ENCODE measurements at regions of chr14 and their contacts with region 1.

Region 1: GRCh38 chr14:96100161-96101029 is 61.2 kb downstream of the C14orf132 start:
- DNase-seq: peak; percentile 75 to 79
- ATAC-seq: peak in 3 of 4 donors; percentile 46 to 62 (median 52)
- H3K4me3 ChIP-seq: no peak overlapping the region
- H3K27ac ChIP-seq: no peak overlapping the region
- H3K4me1 ChIP-seq: no peaks in the 10 kb centered on the region
- H3K27me3 ChIP-seq: peaks cover 0 to 20% (median 2%) of the 10 kb centered on the region in 3 donors
- CTCF ChIP-seq: peak; percentile 54

Region 2: DNA sequence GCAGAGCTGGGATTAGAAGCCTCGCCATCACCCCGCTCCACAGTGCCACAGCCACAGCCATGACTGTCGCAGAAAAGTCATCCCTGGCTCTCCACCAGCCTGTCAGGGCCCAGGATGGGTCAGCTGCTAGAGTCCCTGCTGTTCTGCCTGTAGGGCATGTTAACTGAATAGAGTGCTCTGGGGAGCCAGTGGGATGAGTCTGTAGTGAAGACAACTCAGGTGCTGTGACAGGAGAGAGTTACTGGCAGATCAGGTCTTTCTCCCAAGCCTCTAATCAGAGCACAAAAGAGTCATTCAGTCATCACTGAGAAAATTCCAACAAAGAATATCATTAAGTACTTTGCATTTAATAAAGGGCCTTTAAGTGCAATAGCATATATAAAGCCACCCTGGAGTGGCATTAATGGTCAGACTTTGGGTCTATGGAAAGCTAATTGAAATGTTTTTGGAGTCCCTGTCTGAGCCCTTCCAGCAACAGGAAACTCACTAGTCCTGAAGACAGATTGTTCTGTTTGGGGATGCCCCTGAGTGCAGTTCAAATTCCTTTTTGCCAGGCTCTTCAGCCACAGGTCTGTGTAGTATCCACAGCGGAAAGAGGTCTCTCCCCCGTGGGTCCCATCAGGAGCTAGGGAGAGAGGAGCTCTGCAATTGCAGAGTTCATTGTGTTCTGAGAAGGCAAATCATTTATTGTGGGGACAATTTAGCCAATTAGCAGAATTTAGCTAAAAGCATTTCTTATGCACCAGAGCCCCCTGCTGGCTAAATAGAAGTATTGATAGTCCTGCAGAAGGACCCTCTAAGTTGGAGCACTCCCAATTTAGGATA is 106.4 kb before region 1 on chr14:
- intact Hi-C with region 1: loop called in 1 of 2 experiments (anchors 5 kb)
- DNase-seq: no peak
- ATAC-seq: no peak
- H3K4me3 ChIP-seq: no peak overlapping the region
- H3K27ac ChIP-seq: no peak overlapping the region
- H3K4me1 ChIP-seq: no peaks in the 10 kb centered on the region
- H3K27me3 ChIP-seq: peaks cover 0 to 13% (median 3%) of the 10 kb centered on the region in 3 donors
- CTCF ChIP-seq: peak; percentile 58

Region 3: GRCh38 chr14:96136352-96137005 is 36.1 kb after region 1 on chr14:
- intact Hi-C with region 1: no loop called
- DNase-seq: no peak
- ATAC-seq: no peak
- H3K4me3 ChIP-seq: no peak overlapping the region
- H3K27ac ChIP-seq: no peak overlapping the region
- H3K4me1 ChIP-seq: no peaks in the 10 kb centered on the region
- H3K27me3 ChIP-seq: no peaks in the 10 kb centered on the region
- CTCF ChIP-seq: no peak

Region 4: DNA sequence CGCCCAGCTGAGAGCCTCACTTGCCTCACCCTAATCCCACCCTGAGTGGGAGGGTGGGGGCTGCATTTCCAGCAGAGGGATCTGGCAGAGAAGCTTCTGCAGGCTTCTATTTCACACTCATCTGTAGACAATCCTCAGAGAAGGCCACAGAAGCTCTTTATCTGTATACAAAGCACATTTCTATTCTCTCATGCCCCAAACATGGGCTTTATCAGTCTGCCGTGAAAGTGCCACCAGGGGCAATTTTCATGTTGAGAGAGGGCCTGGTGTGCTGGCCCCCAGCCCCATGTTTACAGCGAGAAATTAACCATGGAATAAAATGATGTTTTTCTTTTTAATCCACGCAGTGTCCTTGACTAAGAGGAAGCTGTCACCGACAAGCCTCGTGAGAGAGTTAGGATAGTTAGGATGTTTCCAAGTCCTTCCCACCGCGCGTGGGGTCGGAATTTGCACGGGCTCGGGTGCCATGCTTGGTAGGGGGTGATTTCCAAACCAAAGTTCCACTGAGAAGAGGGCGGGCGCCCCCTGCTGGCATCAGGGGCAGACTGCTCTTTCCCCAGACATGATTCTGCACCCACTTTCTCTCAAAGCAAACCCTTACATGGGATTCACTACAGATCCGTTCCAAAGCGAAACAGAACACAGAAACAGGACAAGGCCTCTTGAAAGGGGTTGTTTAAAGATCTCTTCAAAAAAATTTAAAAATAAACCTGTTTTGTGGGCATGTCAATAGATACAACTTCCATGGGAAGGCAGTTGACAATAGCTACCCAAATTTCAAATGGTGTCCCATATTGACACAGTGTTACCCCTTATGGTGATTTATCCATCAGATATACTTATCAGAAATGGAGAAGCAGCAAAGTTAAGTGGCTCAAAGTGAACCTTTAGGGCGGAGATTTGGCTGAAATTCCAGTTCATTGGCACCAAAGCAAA is 175.1 kb after region 1 on chr14:
- intact Hi-C with region 1: loop called in 1 of 2 experiments (anchors 2 kb)
- DNase-seq: peak; percentile 75 to 80
- ATAC-seq: peak; percentile 52 to 73 (median 66)
- H3K4me3 ChIP-seq: no peak overlapping the region
- H3K27ac ChIP-seq: no peak overlapping the region
- H3K4me1 ChIP-seq: peaks cover 5% of the 10 kb centered on the region
- H3K27me3 ChIP-seq: no peaks in the 10 kb centered on the region
- CTCF ChIP-seq: peak; percentile 82

Region 5: DNA sequence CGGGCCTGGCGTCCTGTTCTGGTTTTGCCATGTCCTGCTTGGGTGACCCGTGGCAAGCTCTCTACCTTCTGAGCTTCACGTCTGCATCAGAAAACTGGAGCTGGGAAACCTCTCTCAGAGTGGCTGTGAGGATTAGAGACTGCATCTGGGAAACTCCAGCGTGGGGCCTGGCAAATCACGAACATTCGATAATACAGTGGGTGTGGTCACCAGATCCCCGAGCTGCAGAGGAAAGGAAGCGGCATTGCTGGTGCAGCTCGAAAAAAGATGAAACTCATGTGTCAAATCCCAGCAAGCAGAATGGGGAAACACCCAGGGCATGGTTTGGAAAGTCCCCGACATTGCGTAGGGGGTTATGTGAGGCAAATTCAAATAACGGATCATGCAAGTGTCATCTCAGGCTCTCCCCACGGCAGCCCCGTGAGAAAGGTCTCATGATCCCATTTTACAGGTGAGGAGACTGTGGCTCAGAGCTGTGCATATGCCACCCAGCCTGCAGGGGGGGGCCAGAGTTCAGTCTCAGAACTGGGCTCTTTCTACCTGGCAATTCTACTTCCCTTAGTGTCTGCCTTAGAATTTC is 598.7 kb after region 1 on chr14:
- intact Hi-C with region 1: no loop called
- DNase-seq: no peak
- ATAC-seq: no peak
- H3K4me3 ChIP-seq: no peak overlapping the region
- H3K27ac ChIP-seq: no peak overlapping the region
- H3K4me1 ChIP-seq: no peaks in the 10 kb centered on the region
- H3K27me3 ChIP-seq: peaks cover 0 to 3% (median 0%) of the 10 kb centered on the region in 3 donors
- CTCF ChIP-seq: no peak